ENCODE measurements at regions of chr17 and their contacts with region 1.

Region 1: GRCh38 chr17:44186307-44187130 is at the start of gene TMUB2:
- DNase-seq: peak; percentile 99 to 100 (median 99)
- H3K4me3 ChIP-seq: peak within 1 kb of the TSS; percentile 100
- H3K4me3 Mint-ChIP-seq: peak within 1 kb of the TSS; percentile 90 to 100 (median 99)
- H3K27ac ChIP-seq: peak within 1 kb of the TSS; percentile 100
- H3K27ac Mint-ChIP-seq: peak within 1 kb of the TSS; percentile 89 to 100 (median 100)
- H3K4me1 ChIP-seq: peaks cover 35% of the 10 kb centered on the region
- H3K4me1 Mint-ChIP-seq: peaks cover 44 to 58% (median 56%) of the 10 kb centered on the region in 3 donors
- H3K27me3 ChIP-seq: no peaks in the 10 kb centered on the region
- H3K27me3 Mint-ChIP-seq: peaks cover 0 to 2% of the 10 kb centered on the region in 2 donors
- total RNA-seq, gene TMUB2: 20.8 to 22.5 TPM

Region 2: DNA sequence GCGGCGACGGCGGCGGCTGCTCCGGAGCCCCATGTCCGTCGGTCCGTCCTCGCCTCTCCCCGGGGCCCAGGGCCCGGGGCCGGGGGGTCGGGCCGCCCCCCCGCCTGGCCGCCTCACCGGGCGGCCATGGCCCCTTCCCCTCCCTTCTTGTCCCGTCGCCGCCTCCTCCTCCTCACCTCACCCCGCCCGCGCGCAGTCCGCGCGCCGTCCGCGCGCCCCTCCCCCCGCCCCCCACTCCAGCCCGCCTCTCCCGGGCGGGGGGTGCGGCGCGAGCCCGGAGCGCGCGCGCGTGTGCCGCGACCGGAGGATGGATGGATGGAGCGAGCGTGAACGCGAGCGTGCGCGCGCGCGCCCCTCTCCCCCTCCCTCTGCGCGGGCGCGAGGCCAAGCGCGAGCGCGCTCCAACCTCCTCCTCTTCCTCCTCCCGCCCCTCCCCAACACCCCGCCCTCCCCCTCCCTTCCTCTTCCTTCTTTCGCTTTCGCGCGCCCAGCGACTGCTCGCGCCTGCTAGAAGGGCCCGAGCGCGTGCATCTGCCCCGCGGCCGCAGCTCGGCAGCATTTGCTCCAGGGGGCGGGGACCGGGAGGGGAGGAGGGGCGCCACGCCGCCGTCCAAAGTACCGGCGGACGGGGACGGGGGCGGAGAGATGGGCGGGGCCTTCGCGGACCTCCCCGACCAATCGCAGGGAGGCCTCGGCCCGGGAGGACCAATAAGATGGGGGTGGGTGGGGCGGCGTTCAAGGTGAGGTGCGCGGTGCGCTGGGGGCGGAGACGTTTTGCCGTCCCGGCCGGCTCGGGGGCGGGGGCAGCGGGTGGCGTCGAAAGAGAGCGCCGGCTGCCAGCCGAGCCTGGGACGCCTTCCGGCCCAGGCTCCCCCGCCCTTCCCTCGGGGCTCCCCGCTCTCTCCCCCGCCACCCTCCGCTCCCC is 13.3 kb after region 1 on chr17 and contains the start of gene ATXN7L3:
- CTCF ChIA-PET with region 1: interaction called, 4 read pairs
- POLR2A ChIA-PET with region 1: interaction called, 33 read pairs
- DNase-seq: peak; percentile 96 to 100 (median 99)
- H3K4me3 ChIP-seq: peak within 1 kb of the TSS; percentile 84
- H3K4me3 Mint-ChIP-seq: peak within 1 kb of the TSS; percentile 87 to 96 (median 91)
- H3K27ac ChIP-seq: peak within 1 kb of the TSS; percentile 76
- H3K27ac Mint-ChIP-seq: peak within 1 kb of the TSS; percentile 86 to 98 (median 94)
- H3K4me1 ChIP-seq: peaks cover 30% of the 10 kb centered on the region
- H3K4me1 Mint-ChIP-seq: peaks cover 38 to 51% (median 41%) of the 10 kb centered on the region in 3 donors
- H3K27me3 ChIP-seq: no peaks in the 10 kb centered on the region
- H3K27me3 Mint-ChIP-seq: peaks cover 0 to 1% of the 10 kb centered on the region in 2 donors
- total RNA-seq, gene ATXN7L3: 96.6 to 111 TPM